CD4-positive, alpha-beta T cell (primary cell): ENCODE measurements at regions of chr1 and their contacts with region 1.

Region 1: GRCh38 chr1:1374929-1375662 is at the start of gene AURKAIP1:
- DNase-seq: peak; percentile 88 to 100 (median 93)
- ATAC-seq: peak; percentile 66
- H3K4me3 ChIP-seq: peak within 1 kb of the TSS; percentile 84
- H3K4me3 Mint-ChIP-seq: peak within 1 kb of the TSS; percentile 99
- H3K27ac ChIP-seq: peak within 1 kb of the TSS; percentile 87 to 89
- H3K27ac Mint-ChIP-seq: peak within 1 kb of the TSS; percentile 91
- H3K4me1 ChIP-seq: peaks cover 54% of the 10 kb centered on the region
- H3K4me1 Mint-ChIP-seq: peaks cover 38% of the 10 kb centered on the region
- H3K27me3 ChIP-seq: no peaks in the 10 kb centered on the region
- H3K27me3 Mint-ChIP-seq: no peaks in the 10 kb centered on the region
- CTCF ChIP-seq: no peak
- total RNA-seq, gene AURKAIP1: 59.2 to 64.6 TPM

Region 2: GRCh38 chr1:1033009-1033587 is 342.0 kb before region 1 on chr1:
- CTCF ChIA-PET with region 1: no interaction called
- POLR2A ChIA-PET with region 1: no interaction called
- intact Hi-C with region 1: loop called in 1 of 2 experiments (anchors 1 kb)
- DNase-seq: peak; percentile 65 to 92 (median 75)
- ATAC-seq: peak; percentile 89
- H3K4me3 ChIP-seq: peak overlapping the region; percentile 40
- H3K4me3 Mint-ChIP-seq: peak overlapping the region; percentile 69
- H3K27ac ChIP-seq: no peak overlapping the region
- H3K27ac Mint-ChIP-seq: no peak overlapping the region
- H3K4me1 ChIP-seq: peaks cover 21% of the 10 kb centered on the region
- H3K4me1 Mint-ChIP-seq: peaks cover 4% of the 10 kb centered on the region
- H3K27me3 ChIP-seq: peaks cover 37 to 40% of the 10 kb centered on the region in 2 experiments
- H3K27me3 Mint-ChIP-seq: peaks cover 35% of the 10 kb centered on the region
- CTCF ChIP-seq: peak; percentile 73

Region 3: DNA sequence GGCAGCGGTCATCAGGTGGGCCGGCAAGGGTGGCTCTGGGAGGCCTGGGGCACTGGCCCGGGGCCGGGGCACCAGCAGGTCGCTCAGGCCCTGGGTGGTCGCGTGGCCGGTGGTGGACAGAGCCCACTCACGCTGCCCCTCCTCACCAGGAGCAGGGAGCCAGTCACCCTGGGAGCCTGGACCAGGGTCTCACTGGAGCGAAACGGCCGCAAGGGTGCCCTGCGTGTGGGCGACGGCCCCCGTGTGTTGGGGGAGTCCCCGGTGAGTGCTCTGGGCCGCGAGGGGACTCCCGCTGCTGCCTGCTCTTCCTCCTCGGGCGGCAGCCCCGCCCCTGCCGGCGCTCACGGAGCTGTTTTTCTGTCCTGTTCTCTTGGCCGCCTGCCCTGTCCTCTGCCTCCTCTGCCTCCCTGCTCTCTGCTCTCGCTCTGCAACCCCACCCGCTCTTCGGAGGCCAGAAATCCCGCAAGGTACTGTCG is 324.5 kb before region 1 on chr1:
- CTCF ChIA-PET with region 1: no interaction called
- POLR2A ChIA-PET with region 1: no interaction called
- intact Hi-C with region 1: no loop called
- DNase-seq: no peak
- ATAC-seq: no peak
- H3K4me3 ChIP-seq: no peak overlapping the region
- H3K4me3 Mint-ChIP-seq: no peak overlapping the region
- H3K27ac ChIP-seq: no peak overlapping the region
- H3K27ac Mint-ChIP-seq: no peak overlapping the region
- H3K4me1 ChIP-seq: no peaks in the 10 kb centered on the region
- H3K4me1 Mint-ChIP-seq: no peaks in the 10 kb centered on the region
- H3K27me3 ChIP-seq: no peaks in the 10 kb centered on the region
- H3K27me3 Mint-ChIP-seq: peaks cover 7% of the 10 kb centered on the region
- CTCF ChIP-seq: no peak

Region 4: GRCh38 chr1:1273512-1274298 is 101.4 kb before region 1 on chr1 and contains the start of gene UBE2J2:
- CTCF ChIA-PET with region 1: no interaction called
- POLR2A ChIA-PET with region 1: interaction called, 8 read pairs
- intact Hi-C with region 1: loop called in 1 of 2 experiments (anchors 2 kb)
- DNase-seq: peak; percentile 87 to 96 (median 92)
- ATAC-seq: peak; percentile 94
- H3K4me3 ChIP-seq: peak within 1 kb of the TSS; percentile 92
- H3K4me3 Mint-ChIP-seq: peak within 1 kb of the TSS; percentile 92
- H3K27ac ChIP-seq: peak within 1 kb of the TSS in 1 of 2 donors; percentile 29
- H3K27ac Mint-ChIP-seq: peak within 1 kb of the TSS; percentile 85
- H3K4me1 ChIP-seq: peaks cover 47% of the 10 kb centered on the region
- H3K4me1 Mint-ChIP-seq: peaks cover 34% of the 10 kb centered on the region
- H3K27me3 ChIP-seq: no peaks in the 10 kb centered on the region
- H3K27me3 Mint-ChIP-seq: no peaks in the 10 kb centered on the region
- CTCF ChIP-seq: no peak
- total RNA-seq, gene UBE2J2: 41.4 to 41.5 TPM

Region 5: DNA sequence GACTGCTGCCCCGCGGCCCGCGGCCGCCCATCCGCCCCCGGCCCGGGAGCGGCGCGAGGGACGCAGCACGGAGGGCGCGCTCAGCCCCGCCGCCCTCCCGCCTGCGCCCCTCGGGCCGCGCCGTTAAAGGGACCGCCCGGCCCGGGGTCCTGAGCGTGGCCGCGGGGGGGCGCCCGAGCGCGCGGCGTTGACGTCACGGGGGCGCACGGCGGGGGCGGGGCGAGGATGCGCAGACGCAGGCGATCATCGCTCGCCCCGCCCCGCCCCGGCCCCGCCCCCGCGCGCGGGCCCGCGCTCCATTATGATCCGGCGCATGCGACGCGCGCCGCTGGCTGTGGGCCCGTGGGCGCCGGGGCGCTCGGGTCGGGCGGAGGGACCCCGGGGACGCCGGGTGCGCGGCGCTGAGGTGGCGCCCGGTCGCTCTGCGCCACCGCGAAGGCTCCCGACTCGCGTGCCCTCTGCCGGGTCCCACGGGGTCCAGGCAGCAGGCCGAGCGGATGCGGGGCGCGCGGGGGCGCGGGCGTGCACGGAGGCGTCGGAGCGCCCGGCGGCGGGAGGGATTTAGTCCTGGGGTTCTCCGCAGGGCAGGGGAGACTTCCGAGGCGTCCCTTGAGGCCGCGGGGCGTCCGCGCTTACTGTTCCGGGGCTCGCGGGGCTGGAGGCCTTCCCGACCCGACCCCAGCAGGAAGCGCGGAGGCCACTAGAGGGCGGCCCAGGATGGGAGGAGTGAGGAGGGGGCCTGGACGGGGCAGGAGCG is 25.7 kb before region 1 on chr1 and contains the start of gene DVL1:
- CTCF ChIA-PET with region 1: interaction called, 9 read pairs
- POLR2A ChIA-PET with region 1: interaction called, 12 read pairs
- intact Hi-C with region 1: loop called (anchors 1 to 2 kb)
- DNase-seq: peak; percentile 58 to 90 (median 70)
- ATAC-seq: peak; percentile 75
- H3K4me3 ChIP-seq: peak within 1 kb of the TSS; percentile 58
- H3K4me3 Mint-ChIP-seq: peak within 1 kb of the TSS; percentile 86
- H3K27ac ChIP-seq: peak within 1 kb of the TSS in 1 of 2 donors; percentile 53
- H3K27ac Mint-ChIP-seq: no peak within 1 kb of the TSS
- H3K4me1 ChIP-seq: peaks cover 58% of the 10 kb centered on the region
- H3K4me1 Mint-ChIP-seq: peaks cover 36% of the 10 kb centered on the region
- H3K27me3 ChIP-seq: peaks cover 14 to 19% of the 10 kb centered on the region in 2 experiments
- H3K27me3 Mint-ChIP-seq: peaks cover 21% of the 10 kb centered on the region
- CTCF ChIP-seq: peak; percentile 27
- total RNA-seq, gene DVL1: 44.9 to 45.5 TPM

Region 6: DNA sequence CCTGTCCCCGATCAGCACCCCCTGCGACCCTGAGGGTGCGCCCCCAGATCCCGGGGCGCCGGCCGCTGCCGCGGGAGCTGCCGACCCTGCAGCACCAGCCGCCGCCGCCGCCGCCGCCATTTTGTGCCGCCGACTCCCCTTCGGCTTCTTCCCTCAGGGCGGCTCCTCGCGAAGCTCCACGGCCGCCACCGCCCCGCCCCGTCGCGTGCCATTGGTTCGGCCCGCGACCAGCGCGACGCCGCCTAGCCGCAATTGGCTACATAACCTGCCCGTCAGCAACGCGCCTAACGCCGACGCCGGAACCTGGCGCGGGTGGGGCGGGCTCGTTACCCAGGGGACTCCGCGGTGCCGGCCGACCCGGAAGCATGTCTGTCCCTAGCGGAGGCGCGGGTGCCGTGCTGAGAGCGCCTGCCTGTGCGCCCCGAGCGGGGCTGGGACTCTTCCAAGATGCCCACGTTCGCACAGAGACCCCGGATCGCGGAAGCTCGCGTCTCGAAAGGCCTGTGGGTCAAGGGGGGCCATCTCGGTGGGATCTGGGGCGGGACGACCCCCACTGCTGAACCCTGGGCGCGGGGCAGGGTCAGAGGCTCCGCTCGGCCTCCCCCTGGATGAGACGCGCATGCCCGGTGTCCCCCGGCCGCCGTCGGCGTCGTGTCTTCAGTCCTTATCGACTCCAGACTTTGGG is 24.2 kb after region 1 on chr1 and contains the start of gene CCNL2:
- CTCF ChIA-PET with region 1: interaction called, 11 read pairs
- POLR2A ChIA-PET with region 1: interaction called, 80 read pairs
- intact Hi-C with region 1: loop called (anchors 1 to 2 kb)
- DNase-seq: peak; percentile 98 to 100 (median 99)
- ATAC-seq: peak; percentile 95
- H3K4me3 ChIP-seq: peak within 1 kb of the TSS; percentile 99
- H3K4me3 Mint-ChIP-seq: peak within 1 kb of the TSS; percentile 92
- H3K27ac ChIP-seq: peak within 1 kb of the TSS; percentile 81 to 89
- H3K27ac Mint-ChIP-seq: peak within 1 kb of the TSS; percentile 86
- H3K4me1 ChIP-seq: peaks cover 47% of the 10 kb centered on the region
- H3K4me1 Mint-ChIP-seq: peaks cover 53% of the 10 kb centered on the region
- H3K27me3 ChIP-seq: no peaks in the 10 kb centered on the region
- H3K27me3 Mint-ChIP-seq: no peaks in the 10 kb centered on the region
- CTCF ChIP-seq: peak; percentile 45
- total RNA-seq, gene CCNL2: 274 to 281 TPM